HepG2 (cell line): ENCODE measurements at regions of chr2 and their contacts with region 1.

Region 1: GRCh38 chr2:216108967-216109921 is at the start of gene XRCC5:
- DNase-seq: peak; percentile 96
- ATAC-seq: peak; percentile 84
- H3K4me3 ChIP-seq: peak within 1 kb of the TSS; percentile 88 to 100 (median 98)
- H3K27ac ChIP-seq: peak within 1 kb of the TSS; percentile 76
- H3K4me1 ChIP-seq: peaks cover 71% of the 10 kb centered on the region
- H3K27me3 ChIP-seq: no peaks in the 10 kb centered on the region; a peak in 1 of 5 replicates
- CTCF ChIP-seq: 0 out of 2 replicates have a peak, but pooled peaks have one; percentile 5
- EP300 ChIP-seq: 0 out of 4 replicates have a peak, but pooled peaks have one; percentile 34 to 58
- POLR2A ChIP-seq: peak; percentile 78 to 91
- RAD21 ChIP-seq: peak; percentile 33; the same call in 1 of the 2 replicates
- total RNA-seq, gene XRCC5: 454 and 733 TPM in 2 replicates

Region 2: DNA sequence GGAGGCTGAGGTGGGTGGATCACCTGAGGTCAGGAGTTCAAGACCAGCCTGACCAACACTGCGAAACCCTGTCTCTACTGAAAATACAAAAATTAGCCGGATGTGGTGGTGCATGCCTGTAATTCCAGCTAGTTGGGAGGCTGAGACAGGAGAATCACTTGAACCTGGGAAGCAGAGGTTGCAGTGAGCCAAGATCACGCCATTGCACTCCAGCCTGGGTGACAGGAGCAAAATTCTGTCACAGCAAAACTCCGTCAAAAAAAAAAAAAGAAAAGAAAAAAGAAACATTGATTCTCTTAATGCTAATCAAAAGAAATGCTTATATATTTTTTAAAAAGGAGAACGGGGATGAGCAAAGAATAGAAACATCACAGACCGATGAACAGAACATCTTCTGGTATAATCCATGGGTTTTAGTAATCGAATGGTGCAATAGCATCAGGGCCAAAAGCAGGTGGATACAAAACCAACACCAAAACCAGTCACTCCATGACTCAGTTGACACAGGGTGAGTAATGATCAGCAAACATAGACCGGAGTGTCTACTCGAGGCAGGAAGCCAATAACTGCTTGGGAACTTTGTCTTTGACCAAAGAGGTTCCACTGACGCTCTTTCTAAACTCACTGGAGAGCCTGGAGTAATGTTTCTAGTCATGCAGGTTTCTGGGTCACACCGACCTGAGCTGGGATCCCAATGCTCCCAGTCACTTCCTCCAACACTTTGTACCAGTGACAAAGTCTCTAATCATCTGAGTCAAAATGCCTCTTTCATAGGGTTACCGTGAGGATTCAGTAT is 127.0 kb before region 1 on chr2:
- CTCF ChIA-PET with region 1: no interaction called
- POLR2A ChIA-PET with region 1: no interaction called
- in situ Hi-C with region 1: no loop called
- intact Hi-C with region 1: no loop called
- DNase-seq: peak; percentile 97
- ATAC-seq: peak; percentile 97
- H3K4me3 ChIP-seq: no peak overlapping the region
- H3K27ac ChIP-seq: peak overlapping the region; percentile 60
- H3K4me1 ChIP-seq: peaks cover 32% of the 10 kb centered on the region
- H3K27me3 ChIP-seq: no peaks in the 10 kb centered on the region
- CTCF ChIP-seq: no peak
- EP300 ChIP-seq: peak in 1 of 2 experiments; percentile 80; a peak in 2 of 4 replicates
- POLR2A ChIP-seq: no peak
- RAD21 ChIP-seq: no peak

Region 3: GRCh38 chr2:216034065-216034464 is 75.2 kb before region 1 on chr2:
- CTCF ChIA-PET with region 1: interaction called, 5 read pairs
- POLR2A ChIA-PET with region 1: interaction called, 4 read pairs
- in situ Hi-C with region 1: no loop called
- intact Hi-C with region 1: loop called (anchors 1 kb)
- DNase-seq: peak; percentile 67
- ATAC-seq: peak; percentile 82
- H3K4me3 ChIP-seq: no peak overlapping the region
- H3K27ac ChIP-seq: no peak overlapping the region
- H3K4me1 ChIP-seq: no peaks in the 10 kb centered on the region
- H3K27me3 ChIP-seq: no peaks in the 10 kb centered on the region
- CTCF ChIP-seq: peak; percentile 86
- EP300 ChIP-seq: no peak
- POLR2A ChIP-seq: no peak
- RAD21 ChIP-seq: peak; percentile 41; the same call in 1 of the 2 replicates

Region 4: GRCh38 chr2:216064011-216064630 is 45.1 kb before region 1 on chr2:
- CTCF ChIA-PET with region 1: interaction called, 3 read pairs
- POLR2A ChIA-PET with region 1: interaction called, 3 read pairs
- in situ Hi-C with region 1: no loop called
- intact Hi-C with region 1: loop called (anchors 1 kb)
- DNase-seq: no peak
- ATAC-seq: peak; percentile 45
- H3K4me3 ChIP-seq: no peak overlapping the region
- H3K27ac ChIP-seq: no peak overlapping the region
- H3K4me1 ChIP-seq: peaks cover 32% of the 10 kb centered on the region
- H3K27me3 ChIP-seq: no peaks in the 10 kb centered on the region
- CTCF ChIP-seq: peak; percentile 58
- EP300 ChIP-seq: no peak
- POLR2A ChIP-seq: no peak
- RAD21 ChIP-seq: 0 out of 2 replicates have a peak, but pooled peaks have one; percentile 9

Region 5: DNA sequence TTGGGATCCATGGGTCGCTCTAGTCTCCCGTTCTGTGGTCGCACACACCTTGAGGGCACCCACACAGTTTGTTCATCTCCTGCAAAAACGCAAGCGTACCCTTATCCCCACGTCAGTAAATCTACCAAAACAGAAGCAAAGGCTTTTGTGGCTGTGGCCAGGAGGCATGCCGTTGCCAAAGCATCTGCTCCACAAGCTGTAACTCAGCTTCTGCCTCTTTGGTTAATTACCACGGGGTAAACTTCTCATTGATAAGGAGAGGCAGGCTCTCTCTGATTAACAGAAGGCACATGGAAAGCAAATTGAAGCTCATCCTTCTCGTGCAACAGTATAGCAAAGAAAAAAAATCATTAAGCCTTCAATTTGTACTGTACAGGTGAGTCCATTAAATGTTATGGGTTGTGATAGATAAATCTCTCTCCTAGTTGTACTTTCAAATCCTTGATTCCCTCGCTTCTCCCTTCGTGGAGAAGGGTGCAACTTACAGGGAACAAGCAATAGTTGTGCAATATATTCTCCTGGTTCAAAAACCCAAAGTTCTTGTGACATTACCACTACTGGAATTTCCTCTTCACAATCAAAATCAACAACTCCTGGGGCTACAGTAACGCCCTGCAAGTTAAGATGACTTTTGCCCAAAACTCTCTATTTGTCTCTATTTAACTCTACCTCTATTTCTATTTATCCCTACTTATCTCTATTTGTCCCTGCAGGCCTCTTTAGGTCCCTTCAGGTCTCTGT is 38.0 kb before region 1 on chr2:
- CTCF ChIA-PET with region 1: no interaction called
- POLR2A ChIA-PET with region 1: interaction called, 17 read pairs
- in situ Hi-C with region 1: no loop called
- intact Hi-C with region 1: no loop called
- DNase-seq: peak; percentile 67
- ATAC-seq: peak; percentile 58
- H3K4me3 ChIP-seq: no peak overlapping the region
- H3K27ac ChIP-seq: peak overlapping the region; percentile 48
- H3K4me1 ChIP-seq: peaks cover 95% of the 10 kb centered on the region
- H3K27me3 ChIP-seq: no peaks in the 10 kb centered on the region
- CTCF ChIP-seq: no peak
- EP300 ChIP-seq: peak in 1 of 2 experiments; percentile 78; a peak in 1 of 4 replicates
- POLR2A ChIP-seq: no peak
- RAD21 ChIP-seq: no peak

Region 6: GRCh38 chr2:216081487-216082116 is 27.6 kb before region 1 on chr2 and contains the starts of genes PECR and TMEM169:
- CTCF ChIA-PET with region 1: no interaction called
- POLR2A ChIA-PET with region 1: interaction called, 131 read pairs
- in situ Hi-C with region 1: no loop called
- intact Hi-C with region 1: loop called (anchors 1 kb)
- DNase-seq: peak; percentile 81
- ATAC-seq: peak; percentile 93
- H3K4me3 ChIP-seq: peak within 1 kb of the TSS; percentile 85 to 100 (median 99)
- H3K27ac ChIP-seq: peak within 1 kb of the TSS; percentile 88
- H3K4me1 ChIP-seq: peaks cover 83% of the 10 kb centered on the region
- H3K27me3 ChIP-seq: no peaks in the 10 kb centered on the region; a peak in 2 of 5 replicates
- CTCF ChIP-seq: peak; percentile 34
- EP300 ChIP-seq: no peak
- POLR2A ChIP-seq: peak; percentile 93 to 100
- RAD21 ChIP-seq: peak; percentile 60
- total RNA-seq, gene PECR: 151 and 181 TPM in 2 replicates
- total RNA-seq, gene TMEM169: 4.3 and 4.5 TPM in 2 replicates

Region 7: GRCh38 chr2:216092646-216093045 is 16.6 kb before region 1 on chr2:
- CTCF ChIA-PET with region 1: no interaction called
- POLR2A ChIA-PET with region 1: interaction called, 12 read pairs
- in situ Hi-C with region 1: no loop called
- intact Hi-C with region 1: no loop called
- DNase-seq: no peak
- ATAC-seq: peak; percentile 36; the same call in 1 of the 3 replicates
- H3K4me3 ChIP-seq: no peak overlapping the region
- H3K27ac ChIP-seq: no peak overlapping the region
- H3K4me1 ChIP-seq: peaks cover 6% of the 10 kb centered on the region
- H3K27me3 ChIP-seq: no peaks in the 10 kb centered on the region
- CTCF ChIP-seq: no peak
- EP300 ChIP-seq: no peak
- POLR2A ChIP-seq: no peak
- RAD21 ChIP-seq: no peak

Region 8: DNA sequence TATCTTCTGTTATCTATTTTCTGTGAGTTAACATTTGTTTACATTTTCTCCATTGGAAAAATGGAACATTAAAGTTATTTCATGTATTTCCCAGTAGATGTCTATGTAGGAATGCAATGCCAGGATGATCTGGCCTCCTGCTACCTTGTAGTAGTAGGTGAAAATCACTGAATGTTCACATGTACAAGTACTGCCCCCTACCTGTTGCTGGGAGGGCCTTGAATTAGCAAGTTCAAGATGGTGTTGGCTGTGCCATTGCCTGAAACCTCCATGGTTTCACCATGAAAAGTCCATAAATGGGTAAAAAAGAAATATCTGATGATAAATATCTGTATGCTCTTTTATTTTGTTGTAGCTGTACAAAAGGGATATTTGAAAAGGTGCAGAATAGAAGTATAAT is 30.6 kb after region 1 on chr2:
- CTCF ChIA-PET with region 1: no interaction called
- POLR2A ChIA-PET with region 1: no interaction called
- in situ Hi-C with region 1: no loop called
- intact Hi-C with region 1: loop called (anchors 2 kb)
- DNase-seq: peak; percentile 61
- ATAC-seq: peak; percentile 89
- H3K4me3 ChIP-seq: no peak overlapping the region
- H3K27ac ChIP-seq: no peak overlapping the region
- H3K4me1 ChIP-seq: no peaks in the 10 kb centered on the region
- H3K27me3 ChIP-seq: no peaks in the 10 kb centered on the region
- CTCF ChIP-seq: peak; percentile 70
- EP300 ChIP-seq: no peak
- POLR2A ChIP-seq: no peak
- RAD21 ChIP-seq: peak; percentile 54; the same call in 1 of the 2 replicates